ENCODE measurements at regions of chr10 and their contacts with region 1.

Region 1: GRCh38 chr10:22193945-22194344 is 23.9 kb downstream of the EBLN1 start:
- DNase-seq: no peak
- ATAC-seq: no peak

Region 2: GRCh38 chr10:22222236-22223190 is 28.6 kb after region 1 on chr10:
- intact Hi-C with region 1: loop called (anchors 1 kb)
- DNase-seq: no peak
- ATAC-seq: no peak

Measured in sciatic nerve (tissue), 2 donors.